ENCODE measurements at regions of chrX and their contacts with region 1.

Region 1: DNA sequence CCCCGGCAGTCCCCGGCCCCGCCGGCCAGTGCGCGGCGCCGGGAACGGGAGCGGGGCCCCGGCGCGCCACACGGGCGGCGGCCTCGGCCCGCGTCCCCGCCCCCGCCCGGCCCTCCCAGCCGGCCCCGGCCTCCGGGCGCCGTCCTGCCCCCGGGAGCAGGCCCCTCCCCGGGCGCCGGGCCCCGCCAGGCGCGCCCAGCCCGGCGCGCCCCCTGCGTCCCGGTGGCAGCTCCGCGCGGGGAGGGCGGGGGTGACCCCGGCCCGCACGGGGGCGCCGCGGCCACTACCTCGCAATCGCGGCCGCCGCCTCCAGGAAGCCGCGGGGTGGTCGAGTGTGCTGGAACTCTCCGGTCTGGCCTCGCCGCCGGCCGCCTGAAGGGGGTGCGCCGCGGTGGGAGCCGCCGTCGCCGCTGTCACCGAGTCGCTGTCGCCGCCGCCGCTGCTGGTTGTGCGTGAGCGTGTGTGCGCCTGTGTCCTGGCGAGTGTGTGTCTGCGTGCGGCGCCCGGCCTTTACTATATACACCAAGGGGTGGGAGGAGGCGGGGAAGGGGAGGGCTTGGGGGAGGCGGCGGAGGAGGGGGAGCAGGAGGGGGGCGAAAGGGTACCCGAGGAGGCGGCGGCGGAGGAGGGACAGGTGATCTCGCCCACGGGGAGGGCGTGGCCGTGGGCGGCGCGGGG is at the start of gene RAI2:
- DNase-seq: no peak
- H3K4me3 ChIP-seq: peak within 1 kb of the TSS; percentile 64 to 86
- H3K27ac ChIP-seq: peak within 1 kb of the TSS; percentile 61 to 63
- H3K4me1 ChIP-seq: no peaks in the 10 kb centered on the region
- H3K27me3 ChIP-seq: no peaks in the 10 kb centered on the region
- CTCF ChIP-seq: peak in 1 of 3 experiments; percentile 10
- total RNA-seq, gene RAI2: 21.5 TPM

Region 2: GRCh38 chrX:17736856-17737706 is 123.9 kb before region 1 on chrX and contains the start of gene SCML1:
- intact Hi-C with region 1: loop called (anchors 2 kb)
- DNase-seq: peak; percentile 88 to 98
- H3K4me3 ChIP-seq: peak within 1 kb of the TSS; percentile 55 to 69
- H3K27ac ChIP-seq: peak within 1 kb of the TSS; percentile 92 to 95
- H3K4me1 ChIP-seq: peaks cover 0 to 3% of the 10 kb centered on the region in 2 donors
- H3K27me3 ChIP-seq: no peaks in the 10 kb centered on the region
- CTCF ChIP-seq: no peak
- total RNA-seq, gene SCML1: 5.7 TPM

Region 3: GRCh38 chrX:17817251-17817650 is 43.7 kb before region 1 on chrX:
- intact Hi-C with region 1: loop called (anchors 5 kb)
- DNase-seq: no peak
- H3K4me3 ChIP-seq: no peak overlapping the region
- H3K27ac ChIP-seq: peak overlapping the region in 1 of 2 donors; percentile 39
- H3K4me1 ChIP-seq: no peaks in the 10 kb centered on the region
- H3K27me3 ChIP-seq: no peaks in the 10 kb centered on the region
- CTCF ChIP-seq: no peak

Region 4: GRCh38 chrX:17828171-17828570 is 32.8 kb before region 1 on chrX:
- intact Hi-C with region 1: no loop called
- DNase-seq: no peak
- H3K4me3 ChIP-seq: no peak overlapping the region
- H3K27ac ChIP-seq: no peak overlapping the region
- H3K4me1 ChIP-seq: no peaks in the 10 kb centered on the region
- H3K27me3 ChIP-seq: no peaks in the 10 kb centered on the region
- CTCF ChIP-seq: no peak

Region 5: DNA sequence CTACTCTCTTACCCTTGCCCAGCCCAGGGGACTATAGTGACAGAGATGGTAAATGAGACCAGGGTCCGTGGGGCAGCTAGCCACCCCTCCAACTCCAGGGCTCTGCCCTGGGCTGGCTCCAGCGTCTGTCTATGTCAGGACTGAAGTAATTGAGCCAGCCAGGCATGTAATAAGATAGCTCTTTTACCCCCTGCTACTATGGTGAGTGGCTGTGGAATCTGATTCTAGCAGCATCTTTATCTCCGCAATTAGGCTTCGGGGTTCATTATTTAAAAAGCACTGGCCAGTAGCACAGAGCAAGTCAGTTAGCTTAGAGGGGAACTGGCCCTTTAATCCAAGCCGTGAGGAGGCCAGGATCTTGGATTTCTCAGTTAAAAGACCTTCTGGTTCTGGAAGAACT is 123.5 kb after region 1 on chrX:
- intact Hi-C with region 1: no loop called
- DNase-seq: no peak
- H3K4me3 ChIP-seq: no peak overlapping the region
- H3K27ac ChIP-seq: no peak overlapping the region
- H3K4me1 ChIP-seq: no peaks in the 10 kb centered on the region
- H3K27me3 ChIP-seq: no peaks in the 10 kb centered on the region
- CTCF ChIP-seq: no peak

Region 6: DNA sequence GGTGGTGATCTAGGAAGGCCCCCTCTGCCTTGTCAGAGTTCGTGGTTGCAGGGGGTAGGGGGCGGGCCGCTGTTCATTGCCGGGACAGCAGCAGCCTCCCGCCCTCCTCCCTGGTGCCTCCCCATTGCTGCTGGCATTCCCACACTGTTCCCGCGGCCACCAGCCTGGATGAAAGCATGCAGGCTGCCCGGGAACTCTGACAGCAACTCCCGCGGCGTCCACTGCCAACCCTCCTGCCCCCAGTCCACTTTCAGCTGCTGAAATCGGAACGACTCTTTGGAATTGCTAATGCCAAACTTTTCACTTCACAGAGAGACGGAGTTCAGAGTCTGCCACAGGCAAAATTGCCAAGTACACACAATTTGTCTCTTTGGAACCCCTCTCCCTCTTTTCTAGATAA is 237.8 kb after region 1 on chrX:
- intact Hi-C with region 1: no loop called
- DNase-seq: no peak
- H3K4me3 ChIP-seq: peak overlapping the region in 1 of 2 donors; percentile 6
- H3K27ac ChIP-seq: no peak overlapping the region
- H3K4me1 ChIP-seq: no peaks in the 10 kb centered on the region
- H3K27me3 ChIP-seq: no peaks in the 10 kb centered on the region
- CTCF ChIP-seq: no peak

Region 7: GRCh38 chrX:19121898-19122640 is 1261.1 kb after region 1 on chrX and contains the start of gene ADGRG2:
- intact Hi-C with region 1: loop called (anchors 10 kb)
- DNase-seq: peak in 1 of 2 donors; percentile 70
- H3K4me3 ChIP-seq: peak within 1 kb of the TSS; percentile 57 to 72
- H3K27ac ChIP-seq: peak within 1 kb of the TSS in 1 of 2 donors; percentile 56
- H3K4me1 ChIP-seq: no peaks in the 10 kb centered on the region
- H3K27me3 ChIP-seq: no peaks in the 10 kb centered on the region
- CTCF ChIP-seq: peak in 1 of 3 experiments; percentile 31
- total RNA-seq, gene ADGRG2: 4.3 TPM